ENCODE measurements at regions of chr4 and their contacts with region 1.

Region 1: GRCh38 chr4:85798012-85798770 is 323.2 kb downstream of the ARHGAP24 start:
- DNase-seq: no peak
- CTCF ChIP-seq: no peak

Region 2: GRCh38 chr4:85147439-85148076 is 650.6 kb before region 1 on chr4:
- CTCF ChIA-PET with region 1: interaction called, 10 read pairs
- POLR2A ChIA-PET with region 1: no interaction called
- DNase-seq: peak; percentile 43
- CTCF ChIP-seq: peak; percentile 67

Region 3: DNA sequence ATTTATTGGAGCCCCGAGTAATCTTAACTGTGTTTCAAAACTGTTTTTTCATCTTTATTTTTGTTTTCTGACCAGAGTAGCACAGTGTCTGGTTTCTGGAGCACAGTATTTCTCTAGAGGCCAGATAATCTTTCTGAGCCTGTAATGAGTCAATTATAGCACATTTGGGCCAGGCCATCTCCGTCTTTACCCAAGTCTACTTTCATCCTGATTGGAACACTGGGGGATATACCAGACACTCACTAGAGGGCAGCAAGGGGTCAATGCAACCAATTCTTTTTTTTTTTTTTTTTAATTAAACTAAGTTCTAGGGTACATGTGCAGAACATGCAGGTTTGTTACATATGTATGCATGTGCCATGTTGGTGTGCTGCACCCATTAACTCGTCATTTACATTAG is 41.3 kb before region 1 on chr4:
- CTCF ChIA-PET with region 1: interaction called, 20 read pairs
- POLR2A ChIA-PET with region 1: no interaction called
- DNase-seq: peak; percentile 24
- CTCF ChIP-seq: peak; percentile 39

Region 4: DNA sequence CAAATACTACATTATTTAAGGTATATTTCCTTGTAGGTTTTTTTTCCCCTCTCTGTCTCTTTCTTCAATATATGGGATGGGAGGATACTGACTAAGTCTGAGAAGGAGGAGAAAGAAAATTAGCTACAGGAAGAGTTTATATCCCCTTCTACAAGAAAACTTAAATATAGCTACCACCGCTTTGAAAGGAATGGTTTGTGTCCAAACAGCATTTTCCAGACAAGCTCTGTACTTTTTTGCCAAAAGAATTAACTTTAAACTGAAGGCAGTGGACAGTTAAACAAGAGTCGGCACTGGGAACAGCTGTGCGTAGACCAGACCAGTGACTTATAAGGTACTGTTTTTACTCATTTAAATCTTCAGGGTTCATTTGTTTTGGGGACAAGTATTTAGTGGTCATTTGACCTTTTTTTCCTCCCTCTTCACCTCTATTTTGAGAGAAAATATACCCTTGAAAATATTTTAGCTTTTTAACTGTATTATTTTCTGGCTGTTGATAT is 19.5 kb before region 1 on chr4:
- CTCF ChIA-PET with region 1: interaction called, 36 read pairs
- POLR2A ChIA-PET with region 1: no interaction called
- DNase-seq: peak; percentile 34
- CTCF ChIP-seq: no peak

Region 5: DNA sequence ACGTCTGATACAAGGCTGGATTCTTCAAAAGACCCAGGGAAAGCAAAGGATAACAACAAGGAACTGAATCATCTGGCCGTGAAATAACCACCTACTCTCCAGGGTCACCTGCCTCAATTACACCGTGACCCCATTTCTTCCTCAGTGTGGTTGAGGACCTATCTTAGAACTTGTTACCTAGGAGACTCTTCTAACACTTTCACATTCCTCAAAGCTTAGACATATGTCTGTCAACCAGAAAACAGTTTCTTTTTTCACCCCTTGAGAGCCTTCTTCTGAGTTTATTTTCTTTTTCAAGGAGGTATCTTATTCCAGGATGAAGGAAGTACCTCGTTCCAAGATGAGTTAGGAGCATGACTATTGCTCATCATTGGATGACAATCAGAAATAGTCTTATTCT is 14.6 kb after region 1 on chr4:
- CTCF ChIA-PET with region 1: interaction called, 15 read pairs
- POLR2A ChIA-PET with region 1: no interaction called
- DNase-seq: no peak
- CTCF ChIP-seq: no peak

Measured in GM10248 (cell line).